T-cell (primary cell): ENCODE measurements at regions of chr12 and their contacts with region 1.

Region 1: GRCh38 chr12:88985475-88986030 is 366.7 kb downstream of the DUSP6 start:
- DNase-seq: no peak
- ATAC-seq: no peak
- H3K4me3 ChIP-seq: no peak overlapping the region
- H3K4me3 Mint-ChIP-seq: no peak overlapping the region
- H3K27ac ChIP-seq: no peak overlapping the region
- H3K27ac Mint-ChIP-seq: no peak overlapping the region
- H3K4me1 ChIP-seq: no peaks in the 10 kb centered on the region
- H3K4me1 Mint-ChIP-seq: no peaks in the 10 kb centered on the region
- H3K27me3 ChIP-seq: peaks cover 0 to 3% of the 10 kb centered on the region in 2 experiments
- H3K27me3 Mint-ChIP-seq: peaks cover 19 to 21% of the 10 kb centered on the region in 2 donors

Region 2: GRCh38 chr12:87074801-87075200 is 1910.8 kb before region 1 on chr12:
- CTCF ChIA-PET with region 1: no interaction called
- POLR2A ChIA-PET with region 1: interaction called in 1 of 2 experiments, 11 read pairs
- DNase-seq: no peak
- ATAC-seq: no peak
- H3K4me3 ChIP-seq: no peak overlapping the region
- H3K4me3 Mint-ChIP-seq: no peak overlapping the region
- H3K27ac ChIP-seq: no peak overlapping the region
- H3K27ac Mint-ChIP-seq: no peak overlapping the region
- H3K4me1 ChIP-seq: no peaks in the 10 kb centered on the region
- H3K4me1 Mint-ChIP-seq: no peaks in the 10 kb centered on the region
- H3K27me3 ChIP-seq: no peaks in the 10 kb centered on the region
- H3K27me3 Mint-ChIP-seq: no peaks in the 10 kb centered on the region

Region 3: DNA sequence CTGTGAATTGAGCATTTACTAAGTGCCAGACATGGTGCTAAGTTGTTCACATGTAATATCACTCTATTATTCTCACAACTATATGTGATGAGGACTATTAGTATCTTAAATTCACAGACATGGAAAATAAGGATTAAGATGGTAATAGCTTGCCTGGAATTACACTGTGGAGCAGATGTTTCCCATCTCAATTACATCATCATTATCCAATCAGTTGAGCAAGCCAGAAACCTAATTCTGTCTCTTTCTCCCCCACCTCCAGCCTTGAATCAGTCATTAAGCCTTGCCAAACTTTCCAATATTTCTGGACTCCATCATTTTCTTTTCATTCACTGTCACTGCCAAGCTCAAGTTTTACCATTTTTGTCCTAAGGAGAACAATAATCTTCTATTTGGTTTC is 117.5 kb before region 1 on chr12:
- CTCF ChIA-PET with region 1: no interaction called
- POLR2A ChIA-PET with region 1: interaction called in 1 of 2 experiments, 10 read pairs
- DNase-seq: no peak
- ATAC-seq: no peak
- H3K4me3 ChIP-seq: no peak overlapping the region
- H3K4me3 Mint-ChIP-seq: no peak overlapping the region
- H3K27ac ChIP-seq: no peak overlapping the region
- H3K27ac Mint-ChIP-seq: no peak overlapping the region
- H3K4me1 ChIP-seq: no peaks in the 10 kb centered on the region
- H3K4me1 Mint-ChIP-seq: no peaks in the 10 kb centered on the region
- H3K27me3 ChIP-seq: no peaks in the 10 kb centered on the region
- H3K27me3 Mint-ChIP-seq: no peaks in the 10 kb centered on the region